Right ventricle myocardium inferior (tissue), 1 donor: ENCODE measurements at regions of chr12 and their contacts with region 1.

Region 1: DNA sequence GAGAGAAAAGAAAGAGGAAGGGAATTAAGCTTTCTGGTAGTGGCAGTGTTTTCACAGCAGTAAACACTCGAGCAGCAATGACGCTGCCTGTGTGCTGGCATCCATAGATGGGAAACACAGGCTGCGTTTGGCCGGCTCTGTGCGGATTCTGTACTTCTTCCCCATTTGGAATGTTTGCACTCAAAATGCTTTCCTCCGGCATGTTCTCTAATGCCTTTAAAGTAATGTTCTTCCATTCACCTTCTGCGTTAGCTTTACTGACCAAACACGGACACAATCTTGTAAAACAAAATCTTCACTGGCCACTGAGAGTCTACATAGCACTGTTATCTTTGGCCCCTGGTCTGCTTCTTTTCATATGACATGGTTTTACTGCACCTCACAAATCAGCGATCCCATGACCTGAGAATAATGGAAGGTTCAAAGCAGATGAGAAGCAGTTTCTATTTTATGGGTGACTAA is 31.4 kb downstream of the DCP1B start:
- DNase-seq: no peak
- ATAC-seq: peak; percentile 58

Region 2: GRCh38 chr12:1851151-1851701 is 121.7 kb before region 1 on chr12:
- intact Hi-C with region 1: no loop called
- DNase-seq: no peak
- ATAC-seq: no peak

Region 3: GRCh38 chr12:2017546-2018337 is 44.9 kb after region 1 on chr12:
- intact Hi-C with region 1: loop called (anchors 5 kb)
- DNase-seq: no peak
- ATAC-seq: no peak

Region 4: GRCh38 chr12:2034633-2035430 is 61.9 kb after region 1 on chr12:
- intact Hi-C with region 1: loop called (anchors 5 kb)
- DNase-seq: peak; percentile 94
- ATAC-seq: peak; percentile 81

Region 5: DNA sequence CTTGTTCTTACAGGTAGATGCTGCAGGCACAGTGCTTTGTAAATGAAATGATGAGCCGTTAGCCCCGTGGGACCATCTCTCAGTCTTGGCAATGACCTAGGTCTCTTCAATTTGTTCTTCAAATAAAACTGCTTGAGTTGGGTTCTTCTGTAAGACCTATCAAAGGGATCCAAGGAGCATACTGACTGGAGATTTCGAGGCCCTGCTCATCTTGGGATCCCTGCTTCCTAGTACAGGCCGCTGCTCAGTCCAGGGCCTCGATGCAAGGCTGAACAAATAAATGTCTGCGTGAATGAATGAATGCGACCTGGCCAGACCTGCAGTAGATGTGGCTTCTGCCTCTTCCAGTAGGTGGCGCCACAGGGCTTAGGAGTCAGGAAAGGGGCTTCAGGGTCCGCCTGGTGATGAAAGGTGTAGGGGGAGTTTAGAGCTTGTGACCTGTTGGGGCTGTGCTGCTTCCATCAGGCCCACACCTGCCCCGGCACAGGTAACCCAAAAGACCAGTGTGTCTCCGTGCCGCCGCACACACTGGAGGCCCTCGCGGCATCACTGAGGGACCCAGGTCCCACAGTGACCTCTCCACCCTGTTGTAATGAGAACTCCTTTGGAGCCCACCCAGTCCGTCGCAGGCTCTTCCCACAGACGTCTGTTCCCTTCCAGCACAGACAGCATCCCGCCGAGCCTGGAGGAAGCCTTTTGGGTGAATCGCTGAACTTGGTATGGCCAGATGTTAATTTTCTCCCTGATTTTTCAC is 84.3 kb after region 1 on chr12:
- intact Hi-C with region 1: loop called (anchors 5 kb)
- DNase-seq: no peak
- ATAC-seq: peak; percentile 17

Region 6: DNA sequence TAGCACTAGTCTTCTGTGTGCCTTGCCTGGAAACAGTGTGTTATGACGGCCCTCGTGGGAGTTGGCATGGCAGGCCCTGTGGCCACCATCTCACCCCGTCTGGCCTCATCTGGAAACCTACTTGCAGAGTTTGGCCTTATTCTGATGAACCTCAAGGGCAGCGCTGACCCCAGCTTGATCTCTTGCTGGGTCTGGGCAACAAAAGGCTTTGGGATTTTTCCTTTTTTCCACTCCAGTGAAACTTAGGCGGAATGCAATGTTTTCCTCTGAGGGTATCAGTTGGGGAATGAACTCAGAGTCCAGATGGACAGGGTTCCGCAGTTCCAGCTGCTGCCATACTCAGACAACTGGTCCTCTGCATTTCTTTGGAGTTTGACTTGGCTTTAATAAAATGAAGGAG is 95.8 kb after region 1 on chr12:
- intact Hi-C with region 1: no loop called
- DNase-seq: no peak
- ATAC-seq: peak; percentile 22

Region 7: GRCh38 chr12:2118061-2118460 is 145.2 kb after region 1 on chr12:
- intact Hi-C with region 1: loop called (anchors 10 kb)
- DNase-seq: no peak
- ATAC-seq: peak; percentile 27

Region 8: GRCh38 chr12:2179953-2180736 is 207.3 kb after region 1 on chr12:
- intact Hi-C with region 1: loop called (anchors 1 kb)
- DNase-seq: peak; percentile 77
- ATAC-seq: peak; percentile 87

Region 9: GRCh38 chr12:2284857-2285256 is 312.0 kb after region 1 on chr12:
- intact Hi-C with region 1: loop called (anchors 5 kb)
- DNase-seq: peak; percentile 90
- ATAC-seq: peak; percentile 89